Head of caudate nucleus (tissue), 42 donors: ENCODE measurements at regions of chr6 and their contacts with region 1.

Region 1: GRCh38 chr6:125995972-125996580 is 9.7 kb downstream of the TRMT11 start:
- DNase-seq: peak; percentile 25 to 89 (median 73)

Region 2: DNA sequence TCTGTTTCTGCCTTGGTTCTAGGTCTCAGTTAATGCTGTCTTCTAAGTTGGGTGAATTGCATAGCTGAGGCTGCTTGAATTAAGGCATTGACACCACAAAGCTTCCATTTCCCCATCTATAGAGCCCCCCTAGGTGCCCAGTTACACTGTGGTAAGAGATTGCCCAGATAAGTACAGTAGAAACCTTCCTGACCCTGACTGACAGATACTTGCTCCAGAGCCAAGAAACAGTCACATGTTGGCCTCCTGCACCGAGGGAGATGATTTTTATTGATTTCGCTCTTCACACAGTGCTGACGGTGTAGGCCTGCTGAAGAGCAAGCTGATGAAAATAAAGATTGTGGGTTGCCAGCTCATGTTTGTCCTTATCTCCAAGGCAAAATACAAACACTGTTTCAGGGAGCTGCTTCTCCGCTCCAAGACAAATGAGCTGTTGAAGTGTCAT is 58.2 kb after region 1 on chr6:
- intact Hi-C with region 1: no loop called
- DNase-seq: no peak

Region 3: GRCh38 chr6:127119102-127120022 is 1123.3 kb after region 1 on chr6:
- intact Hi-C with region 1: loop called (anchors 10 kb)
- DNase-seq: peak in 13 of 42 donors; percentile 5 to 43 (median 16)